ENCODE measurements at regions of chr19 and their contacts with region 1.

Region 1: DNA sequence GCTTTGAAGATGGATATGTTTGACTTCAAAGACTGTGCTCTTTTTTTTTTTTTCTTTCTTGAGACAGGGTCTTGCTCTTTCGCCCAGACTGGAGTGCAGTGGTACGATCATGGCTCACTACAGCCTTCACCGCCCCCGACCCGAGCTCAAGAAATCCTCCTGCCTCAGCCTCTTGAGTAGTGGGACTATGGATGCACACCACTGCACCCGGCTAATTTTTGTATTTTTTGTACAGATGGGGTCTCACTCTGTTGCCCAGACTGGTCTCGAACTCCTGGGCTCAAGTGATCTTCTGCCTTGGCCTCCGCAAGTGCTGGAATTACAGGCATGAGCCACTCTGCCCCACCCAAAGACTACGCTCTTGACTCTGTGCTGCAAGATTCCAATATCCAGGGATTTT is 50.4 kb downstream of the SPTBN4 start:
- DNase-seq: no peak
- H3K4me3 ChIP-seq: no peak overlapping the region
- H3K27ac ChIP-seq: no peak overlapping the region
- H3K4me1 ChIP-seq: no peaks in the 10 kb centered on the region
- H3K27me3 ChIP-seq: peaks cover 0 to 40% of the 10 kb centered on the region in 2 donors
- CTCF ChIP-seq: no peak
- POLR2A ChIP-seq: no peak

Region 2: GRCh38 chr19:40489882-40490230 is 27.4 kb before region 1 on chr19:
- intact Hi-C with region 1: loop called (anchors 1 kb)
- DNase-seq: no peak
- H3K4me3 ChIP-seq: no peak overlapping the region
- H3K27ac ChIP-seq: no peak overlapping the region
- H3K4me1 ChIP-seq: no peaks in the 10 kb centered on the region
- H3K27me3 ChIP-seq: no peaks in the 10 kb centered on the region
- CTCF ChIP-seq: no peak
- POLR2A ChIP-seq: no peak

Measured in breast epithelium (tissue), 4 donors.